Activated naive CD4-positive, alpha-beta T cell treated with anti-CD3 and anti-CD28 coated beads for 36 hours (primary cell): ENCODE measurements at regions of chr7 and their contacts with region 1.

Region 1: DNA sequence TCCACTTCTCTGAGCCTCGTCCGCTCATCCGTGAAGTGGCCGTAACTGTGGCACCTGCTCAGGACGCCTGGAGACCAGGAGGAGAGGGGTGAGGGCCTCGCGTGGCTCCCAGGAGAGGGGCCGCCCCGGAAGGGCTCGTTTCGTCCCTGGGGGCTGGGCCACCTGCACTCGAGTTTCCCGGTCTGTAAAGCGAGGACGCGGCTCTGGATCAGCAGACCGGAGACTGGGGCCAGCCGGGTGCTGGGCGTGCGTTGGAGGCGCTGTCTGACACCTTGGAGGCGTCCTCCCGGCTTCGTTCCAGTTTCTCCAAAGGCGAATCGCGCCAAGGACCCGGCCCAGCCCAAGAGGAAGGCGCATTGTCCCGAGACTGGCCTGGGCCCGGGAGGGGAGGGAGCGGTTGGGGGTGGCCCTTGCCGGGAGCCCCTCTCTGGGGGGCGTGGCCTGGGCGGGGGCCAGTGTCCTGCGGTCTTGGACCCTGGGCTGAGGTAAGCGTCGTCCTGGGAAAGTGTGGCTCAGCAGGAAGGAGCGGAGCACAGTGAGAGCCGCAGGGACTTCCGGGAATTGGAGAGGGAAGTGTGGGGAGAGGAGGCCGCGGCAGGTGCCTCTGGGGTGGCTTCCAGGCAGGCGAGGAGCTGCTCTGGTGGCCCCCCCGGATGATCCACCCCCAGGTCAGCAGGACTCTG is 89.6 kb downstream of the FOXL3 start:
- DNase-seq: no peak
- H3K4me3 Mint-ChIP-seq: peak overlapping the region; percentile 49
- H3K27ac Mint-ChIP-seq: no peak overlapping the region
- H3K4me1 Mint-ChIP-seq: peaks cover 28% of the 10 kb centered on the region
- H3K27me3 Mint-ChIP-seq: no peaks in the 10 kb centered on the region

Region 2: DNA sequence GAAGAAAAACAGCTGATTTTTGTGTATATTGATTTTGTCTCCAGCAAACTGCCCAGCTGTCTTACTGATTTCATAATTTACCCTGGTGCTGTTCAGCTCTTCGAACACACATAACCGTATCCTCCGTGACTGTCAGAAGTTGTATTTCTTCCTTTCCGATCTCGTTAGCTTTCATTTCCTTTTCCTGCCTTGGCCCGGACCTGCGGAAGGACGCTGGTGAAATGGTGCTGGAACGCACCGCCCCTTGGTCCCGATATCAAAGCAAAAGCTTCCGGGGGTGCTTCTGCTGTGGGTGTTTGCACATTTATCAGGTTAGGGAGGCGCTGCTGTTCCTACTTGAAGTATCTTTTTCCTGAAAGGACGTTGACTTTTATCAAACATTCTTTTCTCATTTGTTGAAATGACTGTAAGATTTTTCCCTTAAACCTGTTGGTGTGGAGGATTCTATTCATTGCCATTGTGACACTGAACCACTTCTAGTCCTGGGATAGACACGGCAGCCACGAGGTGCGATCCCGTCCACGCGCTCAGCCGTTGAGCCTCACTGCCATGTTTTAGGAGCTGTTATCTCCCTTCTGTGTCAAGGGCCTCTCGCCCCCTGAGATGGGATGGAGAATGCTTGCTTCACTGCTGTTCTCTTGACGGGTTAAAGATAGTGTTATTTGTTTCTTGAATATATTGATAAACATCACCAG is 17.0 kb before region 1 on chr7:
- CTCF ChIA-PET with region 1: no interaction called
- intact Hi-C with region 1: loop called (anchors 2 kb)
- DNase-seq: peak; percentile 69
- H3K4me3 Mint-ChIP-seq: peak overlapping the region; percentile 67
- H3K27ac Mint-ChIP-seq: peak overlapping the region; percentile 79
- H3K4me1 Mint-ChIP-seq: peaks cover 66% of the 10 kb centered on the region
- H3K27me3 Mint-ChIP-seq: no peaks in the 10 kb centered on the region